Lower leg skin (tissue), 4 donors: ENCODE measurements at regions of chr10 and their contacts with region 1.

Region 1: DNA sequence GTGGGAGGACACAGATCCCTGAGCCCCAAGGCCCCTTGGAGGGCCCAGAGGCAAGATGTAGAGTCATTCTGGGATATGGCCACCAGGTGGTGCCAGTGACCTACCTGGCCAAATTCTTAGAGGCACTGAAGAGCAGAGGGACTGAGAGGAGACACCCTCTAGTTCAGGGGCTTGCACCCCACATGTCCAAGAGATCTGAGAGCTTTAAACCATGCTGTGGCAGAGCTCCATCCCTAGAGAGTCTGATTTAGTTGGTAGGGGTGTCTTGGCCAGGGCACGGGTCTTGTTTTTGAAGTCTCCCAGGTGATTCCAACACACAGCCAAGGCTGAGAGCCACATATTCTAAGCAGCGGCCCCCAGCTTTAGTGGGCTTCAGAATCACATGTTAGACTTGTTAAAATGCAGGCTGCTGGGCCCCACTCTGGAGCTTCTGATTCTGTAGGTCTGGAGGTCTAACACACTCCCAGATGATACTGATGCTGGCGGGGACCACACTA is 52.5 kb downstream of the PRF1 start:
- DNase-seq: peak; percentile 49 to 94
- H3K4me3 ChIP-seq: no peak overlapping the region
- CTCF ChIP-seq: peak in 1 of 3 donors; percentile 86
- POLR2A ChIP-seq: no peak

Region 2: DNA sequence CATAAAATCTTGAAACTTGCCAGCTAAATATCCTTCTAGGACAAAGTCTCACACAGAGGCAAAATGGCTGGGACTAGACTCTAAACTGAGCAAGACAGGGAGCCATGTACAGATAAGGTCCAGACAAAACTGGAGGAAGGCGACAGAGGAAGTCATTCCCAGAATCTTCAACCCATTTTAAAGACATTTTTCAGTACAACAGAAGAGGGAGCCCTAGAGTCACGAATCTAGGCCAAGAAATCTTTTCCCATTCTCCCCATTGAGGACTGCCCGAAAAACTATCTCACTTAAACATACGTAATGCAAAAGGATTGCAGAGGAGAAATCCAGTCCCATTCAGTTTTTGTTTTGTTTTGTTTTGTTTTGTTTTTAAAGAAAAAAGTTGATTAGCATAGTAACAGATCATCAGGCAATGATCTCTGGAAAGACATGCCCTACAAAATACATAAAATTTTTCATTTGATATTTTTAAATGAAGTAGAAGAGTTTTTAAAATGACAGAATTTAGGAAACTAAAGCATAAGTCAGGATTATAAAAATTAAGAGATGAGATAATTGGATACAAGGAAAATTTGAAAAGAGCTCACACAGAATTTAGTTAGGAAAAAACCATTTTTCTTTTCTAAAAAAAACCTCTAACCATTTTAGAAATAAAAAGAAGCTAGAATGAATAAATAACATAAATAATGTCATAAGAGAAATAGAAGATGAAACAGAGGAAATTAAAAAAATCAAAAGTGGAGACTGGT is 69.4 kb after region 1 on chr10:
- intact Hi-C with region 1: no loop called
- DNase-seq: no peak
- H3K4me3 ChIP-seq: no peak overlapping the region
- CTCF ChIP-seq: no peak
- POLR2A ChIP-seq: no peak

Region 3: DNA sequence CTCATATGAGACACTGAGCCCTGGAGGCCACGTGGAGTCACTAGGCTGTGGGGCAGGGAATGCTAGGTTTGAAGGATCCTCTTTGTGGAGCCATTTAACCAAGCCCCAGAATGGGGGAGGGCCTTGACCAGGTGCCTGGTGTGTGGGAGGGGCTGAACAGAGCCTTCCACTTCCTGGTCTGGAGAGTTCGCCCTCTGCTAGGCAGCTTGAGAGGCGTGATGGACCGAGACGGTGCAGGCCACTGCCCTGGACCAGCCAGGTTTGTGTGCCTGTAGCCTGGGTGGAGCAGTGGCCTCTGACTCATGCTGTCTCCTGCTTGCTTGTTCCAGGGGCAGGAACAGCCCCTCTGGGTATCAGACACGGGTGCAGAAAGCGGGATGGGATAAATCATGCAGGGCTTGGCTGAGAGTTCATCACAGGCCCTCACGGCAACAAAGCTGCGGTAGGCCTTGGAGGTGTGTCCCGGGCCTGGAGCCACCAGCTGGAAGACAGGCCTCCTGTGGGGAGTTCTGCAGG is 149.7 kb after region 1 on chr10:
- intact Hi-C with region 1: no loop called
- DNase-seq: no peak
- H3K4me3 ChIP-seq: no peak overlapping the region
- CTCF ChIP-seq: no peak
- POLR2A ChIP-seq: no peak

Region 4: GRCh38 chr10:70761031-70761601 is 211.1 kb after region 1 on chr10:
- intact Hi-C with region 1: loop called (anchors 5 kb)
- DNase-seq: no peak
- H3K4me3 ChIP-seq: no peak overlapping the region
- CTCF ChIP-seq: no peak
- POLR2A ChIP-seq: no peak

Region 5: GRCh38 chr10:70880077-70880534 is 330.1 kb after region 1 on chr10:
- intact Hi-C with region 1: loop called (anchors 5 kb)
- DNase-seq: peak; percentile 68 to 92
- H3K4me3 ChIP-seq: no peak overlapping the region
- CTCF ChIP-seq: peak in 1 of 3 donors; percentile 59
- POLR2A ChIP-seq: no peak